ENCODE measurements at regions of chr2 and their contacts with region 1.

Region 1: GRCh38 chr2:237590272-237591140 is at the start of gene RAB17:
- DNase-seq: no peak
- H3K4me3 ChIP-seq: no peak within 1 kb of the TSS
- CTCF ChIP-seq: peak in 1 of 3 donors; percentile 61
- POLR2A ChIP-seq: no peak
- total RNA-seq, gene RAB17: 1.7 to 6.3 (median 2.8) TPM

Region 2: GRCh38 chr2:237889811-237890210 is 299.3 kb after region 1 on chr2:
- intact Hi-C with region 1: loop called (anchors 2 kb)
- DNase-seq: no peak
- H3K4me3 ChIP-seq: no peak overlapping the region
- CTCF ChIP-seq: no peak
- POLR2A ChIP-seq: no peak